Caco-2 (cell line): ENCODE measurements at regions of chr1 and their contacts with region 1.

Region 1: GRCh38 chr1:176843352-176844297 is 320.9 kb downstream of the ASTN1 start:
- DNase-seq: peak in 1 of 2 experiments; percentile 44
- H3K4me3 ChIP-seq: no peak overlapping the region
- H3K4me3 Mint-ChIP-seq: no peak overlapping the region
- H3K27ac Mint-ChIP-seq: no peak overlapping the region
- H3K4me1 ChIP-seq: no peaks in the 10 kb centered on the region
- H3K4me1 Mint-ChIP-seq: no peaks in the 10 kb centered on the region
- H3K27me3 ChIP-seq: no peaks in the 10 kb centered on the region
- H3K27me3 Mint-ChIP-seq: peaks cover 15% of the 10 kb centered on the region
- CTCF ChIP-seq: peak; percentile 43 to 51

Region 2: DNA sequence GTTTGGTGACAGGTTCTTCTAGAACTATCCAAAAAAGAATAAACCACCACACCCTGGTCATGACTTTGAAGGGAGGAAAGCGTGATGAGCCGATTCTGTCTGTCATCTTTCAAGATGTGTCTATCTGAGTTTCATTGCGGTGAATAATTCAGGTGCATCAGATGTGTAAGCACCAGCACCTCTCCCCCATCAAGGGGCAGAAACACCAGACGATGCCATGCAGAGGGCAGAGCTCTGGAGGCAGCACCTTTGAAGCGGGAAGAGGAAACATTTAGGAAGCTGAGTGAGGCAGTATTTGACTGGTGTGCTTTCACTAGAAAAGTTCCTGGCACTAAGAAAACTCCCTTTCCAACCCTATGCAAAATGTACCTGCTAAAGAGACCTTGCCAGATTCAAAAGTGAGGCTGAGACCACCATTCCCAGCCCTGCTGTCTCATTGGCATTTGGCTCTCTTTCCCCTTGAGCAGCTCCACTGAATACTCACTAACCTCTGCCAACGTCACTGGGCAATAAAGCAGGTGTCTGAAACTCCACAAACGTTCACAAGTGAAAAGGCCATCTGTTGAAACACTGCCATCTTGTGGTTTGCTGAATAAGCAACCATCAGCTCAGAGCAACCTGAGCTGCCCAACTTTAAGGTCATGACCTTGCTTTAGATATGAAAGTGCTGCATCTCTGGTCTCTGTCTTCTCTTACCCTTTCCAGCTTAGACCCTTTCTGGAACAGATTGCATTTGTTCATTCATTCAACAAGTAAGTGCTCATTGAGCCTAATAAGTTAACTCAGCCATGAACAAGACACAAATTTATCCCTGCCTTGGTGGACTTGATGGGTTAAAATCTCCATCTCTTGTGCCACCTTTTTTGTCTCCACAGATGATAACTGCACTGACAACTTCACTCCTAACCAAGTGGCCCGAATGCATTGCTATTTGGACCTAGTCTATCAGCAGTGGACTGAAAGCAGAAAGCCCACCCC is 152.1 kb before region 1 on chr1:
- CTCF ChIA-PET with region 1: no interaction called
- POLR2A ChIA-PET with region 1: no interaction called
- intact Hi-C with region 1: loop called (anchors 1 kb)
- DNase-seq: peak; percentile 56 to 61
- H3K4me3 ChIP-seq: no peak overlapping the region
- H3K4me3 Mint-ChIP-seq: no peak overlapping the region
- H3K27ac Mint-ChIP-seq: no peak overlapping the region
- H3K4me1 ChIP-seq: no peaks in the 10 kb centered on the region
- H3K4me1 Mint-ChIP-seq: no peaks in the 10 kb centered on the region
- H3K27me3 ChIP-seq: no peaks in the 10 kb centered on the region
- H3K27me3 Mint-ChIP-seq: peaks cover 16% of the 10 kb centered on the region
- CTCF ChIP-seq: peak; percentile 71 to 76